Calu3 (cell line): ENCODE measurements at regions of chr4 and their contacts with region 1.

Region 1: GRCh38 chr4:27048429-27049238 is 188.0 kb downstream of the STIM2 start:
- DNase-seq: no peak
- H3K4me3 Mint-ChIP-seq: peak overlapping the region; percentile 26
- H3K27ac Mint-ChIP-seq: no peak overlapping the region
- H3K4me1 Mint-ChIP-seq: peaks cover under 1% of the 10 kb centered on the region
- H3K27me3 Mint-ChIP-seq: no peaks in the 10 kb centered on the region
- CTCF ChIP-seq: peak; percentile 35

Region 2: DNA sequence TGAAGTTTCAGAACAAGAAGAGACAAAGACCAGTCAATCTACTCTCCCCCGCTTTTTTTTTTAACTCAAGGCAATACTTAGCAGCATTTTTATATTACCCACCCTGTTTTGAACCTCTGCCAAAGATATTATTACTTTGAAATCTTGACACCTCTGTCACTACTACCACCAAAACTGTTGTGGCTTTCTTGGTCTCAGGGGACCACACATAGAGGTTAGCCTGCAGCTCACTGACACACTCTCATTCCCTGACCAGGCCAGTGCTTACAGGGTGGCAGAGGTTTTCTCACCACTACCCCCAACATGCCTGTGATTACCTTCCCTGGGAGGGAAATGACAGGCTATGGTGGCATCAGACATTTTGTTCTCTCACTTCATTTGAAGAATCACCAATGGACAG is 325.4 kb before region 1 on chr4:
- CTCF ChIA-PET with region 1: no interaction called
- intact Hi-C with region 1: no loop called
- DNase-seq: no peak
- H3K4me3 Mint-ChIP-seq: no peak overlapping the region
- H3K27ac Mint-ChIP-seq: no peak overlapping the region
- H3K4me1 Mint-ChIP-seq: no peaks in the 10 kb centered on the region
- H3K27me3 Mint-ChIP-seq: no peaks in the 10 kb centered on the region
- CTCF ChIP-seq: no peak

Region 3: DNA sequence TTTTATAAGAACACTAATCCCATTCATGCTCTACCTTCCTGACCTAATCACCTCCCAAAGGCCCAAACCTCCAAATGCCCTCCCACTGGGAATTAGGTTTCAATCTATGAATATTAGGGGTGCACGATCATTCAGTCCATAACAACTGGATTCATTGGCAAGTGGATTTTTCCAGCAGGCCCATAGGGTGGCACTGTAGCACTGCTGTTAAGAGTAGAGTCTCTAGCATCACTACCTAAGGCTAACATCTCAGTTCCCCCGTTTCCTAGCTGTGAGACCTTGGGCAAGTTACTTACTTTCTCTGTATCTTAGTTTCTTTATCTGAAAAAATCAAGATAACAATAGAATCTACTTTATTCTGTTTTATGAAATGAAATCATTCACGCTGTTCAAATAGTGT is 127.8 kb after region 1 on chr4:
- CTCF ChIA-PET with region 1: no interaction called
- intact Hi-C with region 1: loop called (anchors 2 kb)
- DNase-seq: peak; percentile 53
- H3K4me3 Mint-ChIP-seq: no peak overlapping the region
- H3K27ac Mint-ChIP-seq: no peak overlapping the region
- H3K4me1 Mint-ChIP-seq: peaks cover 15% of the 10 kb centered on the region
- H3K27me3 Mint-ChIP-seq: no peaks in the 10 kb centered on the region
- CTCF ChIP-seq: no peak

Region 4: GRCh38 chr4:27318743-27319142 is 270.1 kb after region 1 on chr4:
- CTCF ChIA-PET with region 1: interaction called, 3 read pairs
- intact Hi-C with region 1: loop called (anchors 1 kb)
- DNase-seq: peak; percentile 55
- H3K4me3 Mint-ChIP-seq: no peak overlapping the region
- H3K27ac Mint-ChIP-seq: peak overlapping the region; percentile 44
- H3K4me1 Mint-ChIP-seq: peaks cover 24% of the 10 kb centered on the region
- H3K27me3 Mint-ChIP-seq: no peaks in the 10 kb centered on the region
- CTCF ChIP-seq: no peak